ENCODE measurements at regions of chr10 and their contacts with region 1.

Region 1: DNA sequence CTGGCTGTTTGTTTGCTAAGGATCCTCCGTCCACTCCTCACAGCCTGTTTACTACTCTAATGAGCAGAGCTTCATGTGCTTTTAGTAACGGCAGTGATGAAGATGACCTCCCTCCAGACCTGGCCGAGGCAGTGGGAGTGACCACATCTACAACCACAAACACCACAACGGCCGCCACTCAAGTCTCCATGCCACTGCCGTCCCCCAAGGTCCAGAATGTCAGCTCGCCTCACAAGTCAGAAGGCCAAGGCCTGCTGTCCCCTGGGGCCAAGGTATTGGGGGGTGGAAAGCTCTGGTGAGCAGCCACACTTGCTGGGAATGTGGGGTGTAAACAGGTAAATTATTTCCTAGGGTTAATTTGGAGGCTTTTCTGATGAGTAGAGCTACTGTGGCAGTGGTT is 926.4 kb downstream of the IPMK start:
- DNase-seq: no peak
- ATAC-seq: no peak
- H3K4me3 ChIP-seq: no peak overlapping the region
- H3K4me3 Mint-ChIP-seq: no peak overlapping the region
- H3K27ac ChIP-seq: no peak overlapping the region
- H3K27ac Mint-ChIP-seq: no peak overlapping the region
- H3K4me1 ChIP-seq: no peaks in the 10 kb centered on the region
- H3K4me1 Mint-ChIP-seq: no peaks in the 10 kb centered on the region
- H3K27me3 ChIP-seq: no peaks in the 10 kb centered on the region
- H3K27me3 Mint-ChIP-seq: no peaks in the 10 kb centered on the region
- CTCF ChIP-seq: no peak

Region 2: GRCh38 chr10:57247271-57247670 is 94.0 kb before region 1 on chr10:
- intact Hi-C with region 1: no loop called
- DNase-seq: no peak
- ATAC-seq: no peak
- H3K4me3 ChIP-seq: no peak overlapping the region
- H3K4me3 Mint-ChIP-seq: no peak overlapping the region
- H3K27ac ChIP-seq: no peak overlapping the region
- H3K27ac Mint-ChIP-seq: no peak overlapping the region
- H3K4me1 ChIP-seq: no peaks in the 10 kb centered on the region
- H3K4me1 Mint-ChIP-seq: no peaks in the 10 kb centered on the region
- H3K27me3 ChIP-seq: no peaks in the 10 kb centered on the region
- H3K27me3 Mint-ChIP-seq: no peaks in the 10 kb centered on the region
- CTCF ChIP-seq: no peak

Region 3: GRCh38 chr10:57314046-57314445 is 27.2 kb before region 1 on chr10:
- intact Hi-C with region 1: no loop called
- DNase-seq: no peak
- ATAC-seq: no peak
- H3K4me3 ChIP-seq: no peak overlapping the region
- H3K4me3 Mint-ChIP-seq: no peak overlapping the region
- H3K27ac ChIP-seq: no peak overlapping the region
- H3K27ac Mint-ChIP-seq: no peak overlapping the region
- H3K4me1 ChIP-seq: no peaks in the 10 kb centered on the region
- H3K4me1 Mint-ChIP-seq: no peaks in the 10 kb centered on the region
- H3K27me3 ChIP-seq: no peaks in the 10 kb centered on the region
- H3K27me3 Mint-ChIP-seq: no peaks in the 10 kb centered on the region
- CTCF ChIP-seq: no peak

Region 4: GRCh38 chr10:58299580-58299979 is 958.3 kb after region 1 on chr10:
- intact Hi-C with region 1: loop called (anchors 10 kb)
- DNase-seq: peak; percentile 18 to 82
- ATAC-seq: peak; percentile 53 to 79 (median 78)
- H3K4me3 ChIP-seq: no peak overlapping the region
- H3K4me3 Mint-ChIP-seq: no peak overlapping the region
- H3K27ac ChIP-seq: no peak overlapping the region
- H3K27ac Mint-ChIP-seq: no peak overlapping the region
- H3K4me1 ChIP-seq: no peaks in the 10 kb centered on the region
- H3K4me1 Mint-ChIP-seq: no peaks in the 10 kb centered on the region
- H3K27me3 ChIP-seq: peaks cover 3% of the 10 kb centered on the region
- H3K27me3 Mint-ChIP-seq: peaks cover 0 to 12% of the 10 kb centered on the region in 2 donors
- CTCF ChIP-seq: peak; percentile 78

Measured in natural killer cell (primary cell).